ENCODE measurements at regions of chr5 and their contacts with region 1.

Region 1: DNA sequence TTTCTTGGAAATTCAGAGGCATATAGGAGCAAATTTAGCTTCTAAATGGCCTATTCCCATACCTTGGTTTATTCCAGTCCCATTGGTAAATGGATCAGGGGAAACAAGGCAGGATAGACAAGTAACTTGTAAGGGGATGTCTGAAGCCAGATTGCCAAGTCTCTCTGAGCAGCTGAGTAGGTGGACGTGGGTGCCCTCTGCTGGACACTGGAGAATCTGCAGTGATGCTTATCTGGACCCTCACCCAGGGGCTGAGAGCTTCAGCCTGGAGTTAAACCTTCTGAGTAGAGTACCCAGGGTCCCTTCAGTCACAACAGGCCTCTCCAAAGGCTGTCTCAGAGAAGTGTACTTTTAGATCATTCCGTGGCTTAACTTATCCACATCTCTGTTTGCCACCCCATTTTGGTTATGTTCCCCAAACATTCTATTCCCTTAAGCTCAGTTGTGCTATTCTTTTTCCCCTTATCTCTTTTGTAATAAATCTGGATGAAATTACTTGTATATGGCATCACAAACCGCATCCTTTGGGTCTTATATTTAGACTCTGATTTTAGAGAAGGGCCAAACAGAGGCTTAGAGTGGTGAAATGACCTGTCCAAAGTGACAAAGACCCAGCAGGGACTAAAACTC is 218.3 kb upstream of the GLRA1 start:
- DNase-seq: peak; percentile 82
- ATAC-seq: peak; percentile 96
- H3K4me3 Mint-ChIP-seq: no peak overlapping the region
- H3K27ac Mint-ChIP-seq: no peak overlapping the region
- H3K4me1 Mint-ChIP-seq: peaks cover 11% of the 10 kb centered on the region
- H3K27me3 Mint-ChIP-seq: no peaks in the 10 kb centered on the region
- CTCF ChIP-seq: peak; percentile 89

Region 2: DNA sequence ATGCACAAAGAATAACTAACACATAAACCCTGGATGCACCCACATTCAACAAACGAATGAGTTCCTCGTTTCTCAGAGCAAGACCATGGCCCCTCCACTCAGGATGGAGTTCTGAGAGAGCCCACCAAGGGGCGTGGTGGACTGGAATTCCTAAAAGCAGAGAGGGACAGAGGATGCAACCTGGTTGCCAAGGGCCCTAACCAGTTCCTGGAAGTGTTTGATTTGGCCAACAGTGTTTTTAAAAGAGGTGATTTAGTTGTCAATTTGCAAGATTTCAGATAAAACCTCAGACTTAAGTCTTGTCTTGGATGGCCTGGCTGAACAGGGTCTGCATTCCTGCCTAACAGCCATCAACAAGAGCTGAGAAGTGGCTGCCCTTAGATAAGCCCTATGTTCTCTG is 252.7 kb before region 1 on chr5:
- CTCF ChIA-PET with region 1: interaction called, 12 read pairs
- POLR2A ChIA-PET with region 1: no interaction called
- DNase-seq: no peak
- ATAC-seq: 0 out of 2 replicates have a peak, but pooled peaks have one; percentile 29
- H3K4me3 Mint-ChIP-seq: no peak overlapping the region
- H3K27ac Mint-ChIP-seq: no peak overlapping the region
- H3K4me1 Mint-ChIP-seq: peaks cover 13% of the 10 kb centered on the region
- H3K27me3 Mint-ChIP-seq: peaks cover 54% of the 10 kb centered on the region
- CTCF ChIP-seq: no peak

Region 3: DNA sequence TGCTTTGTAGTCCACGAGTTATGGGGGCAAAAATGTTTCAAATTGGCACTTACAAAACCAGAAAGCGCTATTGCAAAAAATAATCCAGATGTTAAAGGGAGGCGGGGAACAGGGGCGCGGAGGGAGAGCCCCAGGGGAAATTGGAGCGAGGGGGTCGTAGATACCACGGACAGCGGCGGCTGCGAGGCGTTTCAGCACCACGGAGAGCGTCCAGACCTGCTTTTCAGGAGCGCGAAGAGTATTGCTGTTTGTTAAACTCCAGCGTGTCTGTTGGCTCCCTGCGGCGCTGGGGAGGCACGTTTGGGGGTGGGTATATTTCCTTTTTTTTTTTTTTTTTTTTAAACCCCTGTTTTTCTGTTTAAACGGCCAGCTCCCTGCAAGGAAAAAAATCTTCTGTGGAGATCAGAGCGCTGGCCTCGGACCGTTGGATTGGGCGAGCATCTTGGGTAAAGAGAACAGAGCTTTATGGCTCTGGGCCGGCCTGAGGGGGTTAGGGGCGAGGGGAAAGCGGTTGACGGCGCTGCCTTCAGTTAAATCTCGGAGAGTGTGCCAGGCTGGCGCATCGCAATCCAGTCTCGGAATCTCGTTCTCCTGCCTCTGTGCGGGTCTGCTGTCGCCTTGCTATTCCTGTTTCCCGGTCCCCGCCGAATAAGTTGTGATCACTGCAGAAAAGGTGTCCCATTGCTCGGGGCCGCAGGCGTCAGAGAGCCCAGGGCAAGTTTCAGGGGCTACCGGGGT is 218.2 kb before region 1 on chr5 and contains the start of gene GLRA1:
- CTCF ChIA-PET with region 1: interaction called, 24 read pairs
- POLR2A ChIA-PET with region 1: no interaction called
- DNase-seq: peak; percentile 85
- ATAC-seq: peak; percentile 82
- H3K4me3 Mint-ChIP-seq: peak within 1 kb of the TSS; percentile 47
- H3K27ac Mint-ChIP-seq: no peak within 1 kb of the TSS
- H3K4me1 Mint-ChIP-seq: peaks cover 15% of the 10 kb centered on the region
- H3K27me3 Mint-ChIP-seq: peaks cover 69% of the 10 kb centered on the region
- CTCF ChIP-seq: no peak
- total RNA-seq, gene GLRA1: not detected in 3 replicates

Region 4: GRCh38 chr5:152349683-152350526 is 206.9 kb after region 1 on chr5:
- CTCF ChIA-PET with region 1: interaction called, 25 read pairs
- POLR2A ChIA-PET with region 1: no interaction called
- DNase-seq: peak; percentile 61
- ATAC-seq: peak; percentile 94
- H3K4me3 Mint-ChIP-seq: no peak overlapping the region
- H3K27ac Mint-ChIP-seq: no peak overlapping the region
- H3K4me1 Mint-ChIP-seq: peaks cover 7% of the 10 kb centered on the region
- H3K27me3 Mint-ChIP-seq: peaks cover 3% of the 10 kb centered on the region; the same call in 1 of the 2 replicates
- CTCF ChIP-seq: peak; percentile 83

Region 5: GRCh38 chr5:152379331-152379730 is 236.4 kb after region 1 on chr5:
- CTCF ChIA-PET with region 1: no interaction called
- POLR2A ChIA-PET with region 1: no interaction called
- DNase-seq: no peak
- ATAC-seq: no peak
- H3K4me3 Mint-ChIP-seq: no peak overlapping the region
- H3K27ac Mint-ChIP-seq: no peak overlapping the region
- H3K4me1 Mint-ChIP-seq: peaks cover 5% of the 10 kb centered on the region; the same call in 1 of the 2 replicates
- H3K27me3 Mint-ChIP-seq: no peaks in the 10 kb centered on the region
- CTCF ChIP-seq: no peak

Measured in WTC11 (cell line).